Activated CD4-positive, alpha-beta T cell treated with anti-CD3 and anti-CD28 coated beads, Interleukin-2, amount 10 ng/mL, durations not matched to agents 7 days and 5 days (primary cell): ENCODE measurements at regions of chr3 and their contacts with region 1.

Region 1: DNA sequence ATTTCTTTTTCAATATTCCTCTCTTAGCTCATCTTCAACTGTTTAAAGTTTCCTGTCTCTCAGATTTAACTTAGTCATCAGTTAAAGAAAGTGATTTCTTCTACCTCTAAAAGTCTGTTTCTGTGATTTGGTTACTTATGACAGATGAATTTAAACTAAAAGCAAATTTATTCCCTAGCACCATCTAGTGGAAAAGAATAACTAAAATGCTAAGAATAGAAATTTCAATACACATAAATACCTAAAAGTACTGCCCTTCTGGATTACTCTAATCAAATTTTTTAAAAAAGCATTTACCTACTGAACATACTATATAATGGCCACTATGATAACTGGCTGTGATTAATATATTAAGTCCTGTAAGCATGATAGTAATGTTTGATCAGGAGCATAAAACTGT is 14.0 kb upstream of the ZCWPW2 start:
- DNase-seq: no peak
- H3K4me3 Mint-ChIP-seq: no peak overlapping the region
- H3K27ac Mint-ChIP-seq: no peak overlapping the region
- H3K4me1 Mint-ChIP-seq: peaks cover 13% of the 10 kb centered on the region
- H3K27me3 Mint-ChIP-seq: no peaks in the 10 kb centered on the region

Region 2: DNA sequence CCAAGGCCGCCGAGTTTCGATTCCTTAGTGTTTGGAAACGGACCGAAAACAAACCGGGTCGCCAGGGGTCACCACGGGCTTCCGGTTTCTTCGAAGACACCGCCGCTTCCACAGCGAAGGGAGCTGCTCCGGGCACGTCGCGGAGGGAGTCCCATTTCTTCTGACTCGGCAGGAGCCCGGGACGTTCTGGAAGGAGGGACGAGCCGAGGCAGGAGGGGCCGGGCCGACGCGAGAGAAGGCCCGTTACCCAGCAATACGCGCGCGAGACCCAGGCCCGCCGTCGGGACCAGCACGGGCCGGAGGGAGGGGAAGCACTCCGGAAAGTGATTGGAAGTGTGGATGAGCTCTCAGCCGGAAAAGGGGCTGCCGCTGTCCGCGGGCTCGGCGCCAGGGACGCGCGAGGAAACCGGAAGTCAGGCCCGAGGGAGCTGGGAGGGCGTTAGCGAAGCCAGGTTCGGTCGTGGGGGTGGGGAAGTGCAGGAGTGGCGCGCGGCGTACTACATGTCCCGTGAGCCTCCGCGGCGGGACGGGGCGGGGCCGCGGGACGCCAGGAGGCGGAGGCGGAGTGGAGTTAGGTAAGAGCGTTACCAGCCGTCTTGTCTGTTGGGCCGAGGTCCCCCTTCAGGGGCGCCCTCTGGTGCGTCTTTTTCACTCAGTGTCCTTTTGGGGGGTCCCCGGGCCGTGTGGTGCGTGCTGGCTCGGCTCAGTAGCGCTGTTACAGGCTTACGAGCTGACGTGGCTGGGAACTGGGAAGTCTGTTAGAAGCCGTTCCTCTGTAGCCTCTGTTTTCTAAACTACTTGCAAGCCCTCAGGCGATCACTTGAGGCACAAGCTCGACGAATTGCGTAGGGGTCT is 14.3 kb after region 1 on chr3 and contains the starts of genes AZI2 and ZCWPW2:
- CTCF ChIA-PET with region 1: interaction called, 11 read pairs
- POLR2A ChIA-PET with region 1: interaction called, 5 read pairs
- DNase-seq: peak; percentile 93
- H3K4me3 Mint-ChIP-seq: peak within 1 kb of the TSS; percentile 93
- H3K27ac Mint-ChIP-seq: peak within 1 kb of the TSS; percentile 99
- H3K4me1 Mint-ChIP-seq: peaks cover 54% of the 10 kb centered on the region
- H3K27me3 Mint-ChIP-seq: no peaks in the 10 kb centered on the region
- total RNA-seq, gene AZI2: 53.5 to 68.8 TPM
- total RNA-seq, gene ZCWPW2: 0.37 to 0.50 TPM